HAP-1 (cell line): ENCODE measurements at regions of chr4 and their contacts with region 1.

Region 1: DNA sequence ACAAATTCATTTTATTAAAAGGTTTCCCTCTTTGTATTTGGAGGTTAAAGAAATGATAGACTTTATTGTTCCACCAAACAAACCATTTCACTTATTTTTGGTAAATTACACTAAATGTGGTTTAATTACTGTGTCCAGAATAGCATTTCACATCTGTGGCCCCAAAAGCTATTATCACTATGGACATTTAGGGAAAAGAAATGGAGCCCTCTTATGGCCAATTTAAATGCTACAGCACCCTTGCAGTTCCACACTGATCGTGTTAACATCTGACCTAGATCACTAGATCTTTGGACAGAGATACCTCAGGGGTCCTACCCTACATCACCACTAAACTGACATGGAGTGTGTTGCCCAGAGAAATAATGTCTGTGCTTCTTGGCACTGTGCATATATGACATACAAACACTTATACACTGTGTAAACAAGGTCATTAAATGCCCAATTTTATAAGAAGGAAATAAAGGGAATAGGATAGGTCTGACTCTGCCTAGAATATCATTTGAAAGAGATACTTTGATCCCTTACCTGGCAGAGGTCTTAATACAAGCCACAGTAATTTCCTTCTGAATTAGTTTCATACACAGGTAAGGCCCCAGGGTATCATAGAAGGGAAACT is 163.9 kb downstream of the KDR start:
- DNase-seq: peak; percentile 18 to 49
- H3K4me3 ChIP-seq: no peak overlapping the region
- H3K4me1 ChIP-seq: peaks cover 6% of the 10 kb centered on the region
- H3K27me3 ChIP-seq: no peaks in the 10 kb centered on the region; the same call in 1 of the 2 replicates

Region 2: GRCh38 chr4:54449999-54450398 is 511.5 kb before region 1 on chr4:
- in situ Hi-C with region 1: no loop called
- DNase-seq: no peak
- H3K4me3 ChIP-seq: no peak overlapping the region
- H3K4me1 ChIP-seq: no peaks in the 10 kb centered on the region
- H3K27me3 ChIP-seq: peaks cover 33% of the 10 kb centered on the region

Region 3: GRCh38 chr4:55012363-55013230 is 51.1 kb after region 1 on chr4:
- in situ Hi-C with region 1: no loop called
- DNase-seq: no peak
- H3K4me3 ChIP-seq: no peak overlapping the region
- H3K4me1 ChIP-seq: no peaks in the 10 kb centered on the region
- H3K27me3 ChIP-seq: no peaks in the 10 kb centered on the region; the same call in 1 of the 2 replicates

Region 4: DNA sequence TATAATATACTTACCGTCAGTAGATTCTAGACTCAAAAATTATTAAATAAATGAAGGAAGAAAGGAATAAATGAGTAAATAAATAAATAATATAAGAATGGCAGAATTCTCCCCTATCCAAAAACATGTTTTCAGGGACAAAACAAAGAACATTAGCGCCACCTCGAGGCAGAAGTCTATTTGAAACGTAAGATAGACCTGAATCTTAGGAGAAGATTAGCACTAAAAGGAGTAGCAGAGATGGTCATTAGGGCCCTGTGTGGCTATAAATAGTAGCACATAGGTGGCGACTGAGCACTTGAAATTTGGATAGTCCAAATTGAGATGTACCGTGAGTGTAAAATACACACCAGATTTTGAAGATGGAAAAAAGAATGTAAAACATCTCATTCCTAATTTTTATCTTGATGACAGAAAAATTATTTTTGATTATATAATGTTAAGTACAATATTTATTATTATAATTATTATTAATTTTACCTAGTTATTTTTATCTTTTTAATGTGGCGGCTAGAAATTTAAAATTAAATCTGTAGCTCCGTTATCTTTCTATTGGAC is 360.3 kb after region 1 on chr4:
- in situ Hi-C with region 1: loop called (anchors 10 kb)
- DNase-seq: peak; percentile 72 to 88
- H3K4me3 ChIP-seq: no peak overlapping the region
- H3K4me1 ChIP-seq: no peaks in the 10 kb centered on the region
- H3K27me3 ChIP-seq: peaks cover 29% of the 10 kb centered on the region